ENCODE measurements at regions of chr1 and their contacts with region 1.

Region 1: DNA sequence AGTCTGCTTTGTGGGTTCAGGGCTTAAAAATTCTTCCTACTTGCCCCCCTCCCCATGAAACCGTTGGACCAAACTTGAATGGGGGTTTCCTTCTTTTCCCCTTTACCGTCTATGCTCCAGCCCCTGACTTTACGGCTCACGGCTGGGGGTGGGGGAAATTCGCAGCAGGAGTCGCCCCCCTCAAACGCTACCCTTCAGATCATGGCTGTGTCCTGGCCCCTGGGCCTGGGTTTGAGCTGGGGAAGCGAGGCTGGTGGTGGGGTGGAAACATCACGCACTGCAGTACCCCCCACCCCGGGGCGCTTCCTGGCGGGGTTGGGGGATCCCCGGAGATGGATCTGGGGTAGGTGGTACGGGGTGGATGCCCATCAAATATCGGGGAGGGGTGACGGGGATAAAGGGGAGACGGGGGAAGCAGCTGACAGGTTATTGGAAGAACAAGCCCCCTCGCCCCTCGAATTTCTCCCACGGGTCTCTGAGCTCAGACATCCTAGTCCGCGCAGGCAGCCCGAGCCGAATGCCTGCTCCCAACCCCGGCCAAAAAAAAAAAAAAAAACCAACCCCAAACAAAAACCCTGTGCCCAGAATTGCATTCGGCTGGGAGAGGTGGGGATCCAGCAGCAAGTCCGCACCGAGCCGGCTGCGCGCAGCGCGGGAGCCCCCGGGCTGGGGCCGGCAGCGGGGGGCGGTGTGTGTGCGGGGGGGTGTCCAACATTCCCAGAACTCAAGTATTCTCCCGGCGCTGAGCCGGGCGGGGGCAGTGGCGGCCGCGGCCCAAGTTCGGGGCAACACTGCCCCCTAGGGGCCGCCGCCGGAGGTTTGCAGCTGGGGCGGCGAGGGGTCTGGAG is 59.0 kb upstream of the ACOT11 start:
- H3K4me3 ChIP-seq: peak overlapping the region; percentile 50
- H3K27ac ChIP-seq: peak overlapping the region; percentile 88
- H3K4me1 ChIP-seq: peaks cover 4% of the 10 kb centered on the region
- CTCF ChIP-seq: peak; percentile 96

Region 2: DNA sequence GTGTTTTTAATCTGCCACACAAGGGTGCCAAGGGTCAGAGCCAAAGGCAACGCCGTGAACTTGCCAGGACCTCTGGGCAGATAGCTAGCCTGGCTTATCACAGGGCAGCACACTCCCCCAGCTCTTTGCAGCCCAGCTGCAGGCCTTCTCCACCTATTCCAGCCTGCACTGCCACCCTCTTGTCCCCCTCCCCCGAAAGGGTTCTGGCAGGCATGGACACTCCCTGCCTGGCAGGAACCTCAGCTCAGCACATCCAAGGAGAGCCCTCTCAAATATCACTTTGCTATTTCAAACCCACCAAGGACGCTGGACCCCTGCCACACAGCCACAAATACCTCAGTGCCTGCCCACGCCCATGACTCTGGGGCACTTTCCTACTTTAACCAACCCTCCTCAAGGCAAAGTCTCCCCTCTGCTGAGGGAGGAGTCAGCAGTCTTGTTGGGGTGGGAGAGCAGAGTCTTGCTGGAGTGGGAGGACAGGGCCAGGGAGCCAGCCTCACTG is 91.9 kb before region 1 on chr1:
- CTCF ChIA-PET with region 1: interaction called, 10 read pairs
- POLR2A ChIA-PET with region 1: interaction called, 3 read pairs
- H3K4me3 ChIP-seq: no peak overlapping the region
- H3K27ac ChIP-seq: no peak overlapping the region
- H3K4me1 ChIP-seq: no peaks in the 10 kb centered on the region; the same call in 1 of the 2 replicates
- CTCF ChIP-seq: no peak

Region 3: GRCh38 chr1:54406339-54407153 is 82.5 kb before region 1 on chr1 and contains the start of gene SSBP3:
- CTCF ChIA-PET with region 1: interaction called, 16 read pairs
- POLR2A ChIA-PET with region 1: interaction called, 44 read pairs
- H3K4me3 ChIP-seq: peak within 1 kb of the TSS; percentile 71
- H3K27ac ChIP-seq: peak within 1 kb of the TSS; percentile 76
- H3K4me1 ChIP-seq: peaks cover 16% of the 10 kb centered on the region
- CTCF ChIP-seq: peak; percentile 86